Activated T-helper 1 cell treated with anti-CD3 and anti-CD28 coated beads, Interleukin-12 subunit alpha, Interleukin-12 subunit beta, Interleukin-2, Interleukin-4 antibody, amounts not matched to agents 30 ng/mL and 10 ng/mL and 1 ng/mL, durations not matched to agents 14 hours and 24 hours and 36 hours (primary cell): ENCODE measurements at regions of chr3 and their contacts with region 1.

Region 1: DNA sequence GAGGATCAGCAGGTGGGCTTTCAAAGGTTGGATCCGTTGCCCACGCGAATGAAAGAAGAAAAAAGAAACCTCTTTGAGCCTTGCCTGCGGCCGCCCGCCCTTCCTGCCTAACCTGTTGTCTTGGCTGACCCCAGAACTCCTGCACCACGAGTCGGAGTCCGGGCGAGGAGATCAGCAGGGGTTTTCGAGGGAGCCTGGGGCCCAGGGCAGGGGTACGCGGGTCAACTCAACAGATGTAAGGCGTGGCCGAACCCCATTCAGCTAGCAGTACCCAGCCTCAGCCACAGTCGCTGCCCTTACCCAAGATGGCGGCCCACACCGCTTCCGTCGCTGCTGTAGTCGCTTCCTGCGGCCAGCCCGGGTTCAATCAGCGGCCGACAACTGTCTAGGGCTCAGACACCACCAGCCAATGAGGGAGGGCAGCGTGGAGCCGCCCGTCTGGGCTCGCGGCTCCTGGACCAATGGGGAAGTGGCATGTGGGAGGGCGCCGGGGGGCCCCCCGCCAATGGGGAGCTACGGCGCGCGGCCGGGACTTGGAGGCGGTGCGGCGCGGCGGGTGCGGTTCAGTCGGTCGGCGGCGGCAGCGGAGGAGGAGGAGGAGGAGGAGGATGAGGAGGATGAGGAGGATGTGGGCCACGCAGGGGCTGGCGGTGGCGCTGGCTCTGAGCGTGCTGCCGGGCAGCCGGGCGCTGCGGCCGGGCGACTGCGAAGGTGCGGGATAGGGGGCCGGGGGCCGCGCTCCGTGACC is at the start of gene MANF:
- DNase-seq: peak; percentile 98
- H3K4me3 Mint-ChIP-seq: peak within 1 kb of the TSS; percentile 99
- H3K27ac Mint-ChIP-seq: peak within 1 kb of the TSS; percentile 98
- H3K4me1 Mint-ChIP-seq: peaks cover 54% of the 10 kb centered on the region
- H3K27me3 Mint-ChIP-seq: no peaks in the 10 kb centered on the region
- total RNA-seq, gene MANF: 200 and 208 TPM in 2 replicates

Region 2: GRCh38 chr3:50272911-50273693 is 1111.8 kb before region 1 on chr3:
- intact Hi-C with region 1: no loop called
- DNase-seq: peak; percentile 82
- H3K4me3 Mint-ChIP-seq: peak overlapping the region; percentile 71
- H3K27ac Mint-ChIP-seq: no peak overlapping the region
- H3K4me1 Mint-ChIP-seq: peaks cover 21% of the 10 kb centered on the region
- H3K27me3 Mint-ChIP-seq: peaks cover 39% of the 10 kb centered on the region

Region 3: DNA sequence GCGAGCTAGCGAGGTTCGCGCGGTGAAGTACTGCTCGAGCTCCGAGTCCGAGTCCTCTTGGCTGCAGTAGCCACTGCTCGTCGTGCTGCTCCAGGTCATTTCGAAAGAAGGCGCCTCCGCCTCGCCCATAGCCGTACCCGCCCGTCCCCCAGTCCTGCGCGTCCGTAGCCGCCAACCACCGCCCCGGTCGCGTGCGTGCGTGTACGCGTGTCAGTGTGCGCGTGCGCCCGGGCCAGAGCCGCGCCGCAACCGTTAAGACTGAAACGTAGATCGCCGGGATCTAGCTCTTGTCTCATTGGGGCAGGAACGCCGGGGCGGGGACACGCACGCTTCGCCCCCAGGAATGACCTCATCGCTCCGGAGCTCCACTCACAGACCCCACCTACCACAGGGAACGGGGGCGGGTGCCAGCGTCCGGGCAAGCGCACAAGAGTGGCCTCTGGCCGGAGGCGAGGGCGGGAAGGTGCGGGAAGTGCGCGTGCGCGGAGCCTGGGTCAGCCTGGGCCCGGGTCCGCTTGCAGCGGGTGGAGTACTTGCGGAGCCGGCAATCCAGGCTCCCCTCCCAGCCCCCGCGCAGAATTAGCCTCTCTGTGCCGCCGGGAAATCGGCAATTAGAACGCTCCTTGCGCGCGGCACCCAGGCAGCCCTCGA is 1047.6 kb before region 1 on chr3:
- intact Hi-C with region 1: loop called (anchors 5 kb)
- DNase-seq: peak; percentile 96
- H3K4me3 Mint-ChIP-seq: peak overlapping the region; percentile 96
- H3K27ac Mint-ChIP-seq: peak overlapping the region; percentile 97
- H3K4me1 Mint-ChIP-seq: peaks cover 51% of the 10 kb centered on the region
- H3K27me3 Mint-ChIP-seq: no peaks in the 10 kb centered on the region

Region 4: DNA sequence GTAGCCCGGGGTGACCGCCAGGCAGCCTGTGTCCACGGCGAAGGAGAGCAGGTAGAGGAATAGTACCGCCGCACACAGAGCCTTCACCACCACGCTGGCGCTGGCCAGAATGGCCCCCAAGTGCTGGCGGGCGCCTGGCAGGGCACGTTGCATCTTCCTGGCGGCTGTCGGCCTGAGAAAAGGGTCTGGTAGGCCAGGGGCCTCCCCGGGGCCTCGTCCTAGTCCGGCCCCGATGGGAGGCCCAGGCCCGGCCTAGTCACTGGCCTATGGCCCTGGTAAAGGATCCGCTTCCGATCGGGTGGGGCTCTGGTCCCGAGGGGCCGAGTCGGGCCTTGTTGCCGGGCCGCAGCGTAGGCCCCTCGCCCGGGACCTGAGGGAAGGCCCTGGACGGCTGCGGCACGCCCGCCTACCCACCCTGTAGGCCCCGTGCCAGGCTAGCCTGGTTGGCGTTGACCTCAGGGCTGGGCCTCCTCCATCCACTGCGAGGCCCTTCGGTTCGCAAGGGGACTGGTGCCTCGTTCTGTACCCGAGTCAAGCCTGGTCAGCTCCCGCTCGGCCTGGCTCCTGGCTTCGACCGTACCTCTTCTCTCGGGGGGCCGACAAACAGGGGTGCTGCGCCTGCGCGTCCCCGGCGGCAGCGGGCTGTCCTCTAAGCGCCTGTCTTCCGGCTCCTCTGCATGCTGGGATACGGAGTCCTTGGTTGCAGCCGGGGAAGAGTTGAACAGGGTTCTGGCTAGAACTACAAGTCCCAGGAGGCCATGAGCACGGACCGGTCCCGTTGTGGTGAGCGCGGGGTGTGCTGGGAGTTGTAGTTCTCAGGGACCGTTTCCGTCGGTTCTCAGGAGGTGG is 1025.8 kb before region 1 on chr3 and contains the start of gene TMEM115:
- intact Hi-C with region 1: loop called (anchors 2 kb)
- DNase-seq: peak; percentile 95
- H3K4me3 Mint-ChIP-seq: peak within 1 kb of the TSS; percentile 99
- H3K27ac Mint-ChIP-seq: peak within 1 kb of the TSS; percentile 96
- H3K4me1 Mint-ChIP-seq: peaks cover 43% of the 10 kb centered on the region
- H3K27me3 Mint-ChIP-seq: peaks cover 4% of the 10 kb centered on the region
- total RNA-seq, gene TMEM115: 23.6 and 25.4 TPM in 2 replicates

Region 5: DNA sequence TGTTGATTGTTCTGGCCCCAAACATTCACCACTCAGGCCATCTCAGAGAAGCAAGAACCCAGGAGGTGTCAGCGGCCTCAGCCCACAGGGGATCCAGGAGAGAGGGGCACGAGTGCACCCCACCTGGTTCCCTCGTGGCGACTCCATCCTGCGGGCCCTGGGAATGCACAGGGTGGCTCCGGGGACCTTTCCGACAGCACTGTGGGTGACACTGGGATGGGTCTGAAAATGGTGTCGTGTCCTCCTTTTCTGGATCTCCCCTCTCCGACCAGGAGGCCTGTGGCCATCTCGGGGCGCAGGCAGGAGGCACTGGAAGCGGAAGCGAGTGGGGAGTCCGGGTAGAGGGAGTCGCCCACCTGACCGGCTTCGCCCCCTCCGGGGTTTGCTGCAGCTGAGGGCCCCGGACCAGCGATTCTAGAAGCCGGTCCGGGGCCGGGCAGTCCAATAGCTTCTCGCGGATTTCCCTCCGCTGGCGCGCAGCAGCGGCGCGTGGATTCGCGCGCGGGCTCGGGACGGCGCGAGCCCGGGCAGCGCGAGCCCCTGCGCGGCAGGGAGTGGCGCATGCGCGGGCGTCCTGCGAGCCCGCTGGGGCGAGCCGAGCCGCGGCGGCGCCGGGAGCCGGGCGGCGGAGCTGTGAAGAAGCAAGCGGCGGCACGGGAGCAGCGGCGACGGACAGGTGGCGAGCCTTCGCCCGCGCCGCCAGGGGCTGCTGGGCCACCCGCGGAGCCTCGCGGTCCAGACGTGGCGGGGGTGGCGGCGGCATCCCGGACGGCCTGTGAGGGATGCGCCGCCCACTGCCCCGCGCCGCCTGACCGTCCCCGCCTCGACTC is 710.3 kb before region 1 on chr3 and contains the start of gene DOCK3:
- intact Hi-C with region 1: loop called (anchors 2 kb)
- DNase-seq: peak; percentile 59
- H3K4me3 Mint-ChIP-seq: peak within 1 kb of the TSS; percentile 80
- H3K27ac Mint-ChIP-seq: peak within 1 kb of the TSS; percentile 31
- H3K4me1 Mint-ChIP-seq: peaks cover 17% of the 10 kb centered on the region
- H3K27me3 Mint-ChIP-seq: peaks cover 63% of the 10 kb centered on the region
- total RNA-seq, gene DOCK3: 1.5 and 1.6 TPM in 2 replicates

Region 6: DNA sequence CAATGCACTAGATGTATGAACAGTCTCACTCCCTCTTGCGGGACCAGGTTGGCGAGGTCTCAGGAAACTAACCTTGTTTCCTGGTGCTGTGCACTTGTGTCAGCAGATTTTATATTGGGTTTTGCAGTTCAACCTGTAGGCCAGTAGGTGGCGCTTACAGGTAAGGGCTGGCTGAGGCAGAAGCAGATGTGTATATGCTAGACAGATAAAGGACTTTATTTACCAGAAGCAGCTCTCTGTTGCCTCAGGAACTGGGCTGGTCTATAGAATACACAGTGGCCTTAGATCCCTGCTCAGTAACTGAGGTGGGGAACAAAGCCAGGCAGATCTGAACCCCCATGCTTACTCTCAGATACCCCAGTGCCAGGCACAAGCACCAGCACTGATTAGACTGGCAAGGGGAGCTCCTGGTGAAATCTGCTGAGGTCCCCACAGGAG is 413.4 kb before region 1 on chr3:
- intact Hi-C with region 1: loop called (anchors 5 kb)
- DNase-seq: peak; percentile 60
- H3K4me3 Mint-ChIP-seq: no peak overlapping the region
- H3K27ac Mint-ChIP-seq: no peak overlapping the region
- H3K4me1 Mint-ChIP-seq: peaks cover 20% of the 10 kb centered on the region
- H3K27me3 Mint-ChIP-seq: no peaks in the 10 kb centered on the region

Region 7: GRCh38 chr3:51538459-51539290 is 153.8 kb after region 1 on chr3 and contains the start of gene RAD54L2:
- intact Hi-C with region 1: loop called (anchors 1 kb)
- DNase-seq: peak; percentile 71
- H3K4me3 Mint-ChIP-seq: peak within 1 kb of the TSS; percentile 93
- H3K27ac Mint-ChIP-seq: peak within 1 kb of the TSS; percentile 90
- H3K4me1 Mint-ChIP-seq: peaks cover 32% of the 10 kb centered on the region
- H3K27me3 Mint-ChIP-seq: no peaks in the 10 kb centered on the region
- total RNA-seq, gene RAD54L2: 43.2 and 46.5 TPM in 2 replicates

Region 8: GRCh38 chr3:51670823-51671733 is 286.2 kb after region 1 on chr3 and contains the start of gene TEX264:
- intact Hi-C with region 1: loop called (anchors 1 kb)
- DNase-seq: peak; percentile 95
- H3K4me3 Mint-ChIP-seq: peak within 1 kb of the TSS; percentile 86
- H3K27ac Mint-ChIP-seq: peak within 1 kb of the TSS; percentile 87
- H3K4me1 Mint-ChIP-seq: peaks cover 65% of the 10 kb centered on the region
- H3K27me3 Mint-ChIP-seq: no peaks in the 10 kb centered on the region
- total RNA-seq, gene TEX264: 50.3 and 52.0 TPM in 2 replicates